IMR-90 (cell line): ENCODE measurements at regions of chr11 and their contacts with region 1.

Region 1: DNA sequence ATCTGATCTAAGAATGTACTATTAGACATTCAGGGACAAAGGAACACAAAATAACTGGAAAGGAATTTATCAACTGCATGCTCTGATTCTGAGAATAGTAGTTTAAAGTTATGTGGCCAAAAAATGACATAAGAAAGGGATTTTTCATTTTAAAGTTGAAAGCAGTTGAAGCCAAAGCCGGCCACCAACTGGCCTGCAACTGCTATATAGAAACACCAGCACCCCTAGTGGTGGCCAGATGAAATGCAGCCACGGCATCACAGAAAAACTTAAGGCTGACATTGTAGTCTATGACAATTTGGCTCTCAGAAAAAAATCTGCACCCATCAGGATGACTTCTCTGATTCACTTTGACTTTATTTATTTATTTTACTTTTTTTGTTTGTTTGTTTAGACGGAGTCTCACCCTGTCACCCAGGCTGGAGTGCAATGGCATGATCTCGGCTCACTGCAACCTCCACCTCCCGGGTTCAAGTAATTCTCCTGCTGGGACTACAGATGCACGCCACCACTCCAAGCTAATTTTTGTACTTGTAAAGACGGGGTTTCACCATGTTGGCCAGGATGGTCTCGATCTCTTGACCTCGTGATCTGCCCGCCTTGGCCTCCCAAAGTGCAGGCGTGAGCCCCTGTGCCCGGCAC is 59.2 kb downstream of the SLC35F2 start:
- DNase-seq: peak; percentile 57
- ATAC-seq: peak; percentile 99
- H3K4me3 ChIP-seq: no peak overlapping the region
- H3K27ac ChIP-seq: no peak overlapping the region
- H3K4me1 ChIP-seq: no peaks in the 10 kb centered on the region
- H3K27me3 ChIP-seq: no peaks in the 10 kb centered on the region
- CTCF ChIP-seq: peak; percentile 84
- POLR2A ChIP-seq: no peak
- RAD21 ChIP-seq: peak; percentile 70

Region 2: DNA sequence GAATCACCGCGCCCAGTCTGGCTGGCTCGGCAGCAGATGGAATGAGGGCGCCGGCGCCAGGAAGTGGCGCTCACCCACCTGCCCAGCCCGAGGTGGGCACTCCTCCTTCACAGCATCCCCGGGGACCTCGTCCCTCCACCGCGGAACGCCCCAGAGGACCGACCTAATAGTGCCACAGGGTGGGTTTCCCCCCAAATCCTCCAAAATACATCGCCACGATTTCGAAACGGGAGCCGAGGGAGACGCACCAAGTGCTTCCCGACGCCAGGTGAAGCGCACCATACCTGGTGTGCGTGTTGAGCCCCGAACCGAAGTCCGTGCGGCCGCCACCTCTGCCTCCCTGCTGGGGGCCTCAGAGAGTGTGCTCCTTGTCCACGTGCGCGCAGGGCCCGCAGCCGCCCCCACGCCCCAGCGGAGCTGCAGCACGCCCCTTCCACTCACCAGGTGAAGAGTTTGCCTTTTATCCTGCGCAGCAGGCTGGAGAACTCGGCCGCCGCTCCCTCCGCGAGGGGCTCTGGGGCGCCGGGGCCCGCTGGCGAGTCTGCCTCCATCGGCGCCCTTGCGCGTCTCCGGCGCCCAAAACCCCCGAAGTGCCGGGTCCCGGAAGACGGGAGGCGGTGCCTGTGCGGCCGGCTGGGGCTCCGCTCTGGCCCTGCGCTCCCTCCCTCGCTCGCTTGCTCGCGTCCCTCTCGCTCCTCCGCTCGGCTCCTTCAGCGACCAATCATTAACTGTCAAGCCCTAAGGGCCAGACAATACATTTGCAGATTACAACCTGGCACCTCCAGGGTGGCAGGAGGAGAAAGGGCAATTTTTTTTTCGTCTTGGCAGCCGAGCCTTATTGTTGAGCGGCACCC is 59.1 kb after region 1 on chr11 and contains the start of gene SLC35F2:
- CTCF ChIA-PET with region 1: no interaction called
- POLR2A ChIA-PET with region 1: no interaction called
- dilution Hi-C with region 1: no loop called
- in situ Hi-C with region 1: no loop called
- intact Hi-C with region 1: loop called (anchors 5 kb)
- DNase-seq: peak; percentile 37
- ATAC-seq: peak; percentile 91
- H3K4me3 ChIP-seq: peak within 1 kb of the TSS; percentile 91
- H3K27ac ChIP-seq: no peak within 1 kb of the TSS; the same call in 1 of the 2 replicates
- H3K4me1 ChIP-seq: no peaks in the 10 kb centered on the region
- H3K27me3 ChIP-seq: peaks cover 4% of the 10 kb centered on the region
- CTCF ChIP-seq: no peak
- POLR2A ChIP-seq: no peak
- RAD21 ChIP-seq: no peak
- total RNA-seq, gene SLC35F2: 15.4 and 16.9 TPM in 2 replicates